ENCODE measurements at regions of chr3 and their contacts with region 1.

Region 1: GRCh38 chr3:125055913-125056745 is at the start of gene HEG1:
- DNase-seq: peak; percentile 74 to 85
- ATAC-seq: peak; percentile 66 to 77 (median 74)
- H3K4me3 ChIP-seq: peak within 1 kb of the TSS; percentile 61
- H3K4me3 Mint-ChIP-seq: peak within 1 kb of the TSS; percentile 97
- H3K27ac ChIP-seq: peak within 1 kb of the TSS; percentile 82
- H3K27ac Mint-ChIP-seq: peak within 1 kb of the TSS; percentile 96
- H3K4me1 ChIP-seq: peaks cover 36% of the 10 kb centered on the region
- H3K4me1 Mint-ChIP-seq: peaks cover 40 to 44% of the 10 kb centered on the region in 2 donors
- H3K27me3 ChIP-seq: no peaks in the 10 kb centered on the region
- H3K27me3 Mint-ChIP-seq: peaks cover 11 to 12% of the 10 kb centered on the region in 2 donors
- CTCF ChIP-seq: no peak
- total RNA-seq, gene HEG1: 52.1 to 83.5 (median 68.1) TPM

Region 2: GRCh38 chr3:124592621-124593441 is 463.3 kb before region 1 on chr3:
- intact Hi-C with region 1: no loop called
- DNase-seq: no peak
- ATAC-seq: no peak
- H3K4me3 ChIP-seq: no peak overlapping the region
- H3K4me3 Mint-ChIP-seq: no peak overlapping the region
- H3K27ac ChIP-seq: no peak overlapping the region
- H3K27ac Mint-ChIP-seq: no peak overlapping the region
- H3K4me1 ChIP-seq: no peaks in the 10 kb centered on the region
- H3K4me1 Mint-ChIP-seq: no peaks in the 10 kb centered on the region
- H3K27me3 ChIP-seq: no peaks in the 10 kb centered on the region
- H3K27me3 Mint-ChIP-seq: peaks cover 0 to 11% of the 10 kb centered on the region in 2 donors
- CTCF ChIP-seq: no peak

Region 3: GRCh38 chr3:124995460-124995994 is 60.6 kb before region 1 on chr3:
- intact Hi-C with region 1: loop called (anchors 2 kb)
- DNase-seq: peak; percentile 51 to 81
- ATAC-seq: peak; percentile 90 to 98 (median 97)
- H3K4me3 ChIP-seq: no peak overlapping the region
- H3K4me3 Mint-ChIP-seq: no peak overlapping the region
- H3K27ac ChIP-seq: peak overlapping the region; percentile 42
- H3K27ac Mint-ChIP-seq: peak overlapping the region; percentile 69 to 83
- H3K4me1 ChIP-seq: peaks cover 12% of the 10 kb centered on the region
- H3K4me1 Mint-ChIP-seq: peaks cover 11 to 17% of the 10 kb centered on the region in 2 donors
- H3K27me3 ChIP-seq: no peaks in the 10 kb centered on the region
- H3K27me3 Mint-ChIP-seq: no peaks in the 10 kb centered on the region
- CTCF ChIP-seq: peak; percentile 75

Region 4: GRCh38 chr3:125011941-125012340 is 44.2 kb before region 1 on chr3:
- intact Hi-C with region 1: loop called (anchors 2 kb)
- DNase-seq: no peak
- ATAC-seq: no peak
- H3K4me3 ChIP-seq: no peak overlapping the region
- H3K4me3 Mint-ChIP-seq: no peak overlapping the region
- H3K27ac ChIP-seq: no peak overlapping the region
- H3K27ac Mint-ChIP-seq: peak overlapping the region; percentile 3 to 48
- H3K4me1 ChIP-seq: peaks cover 25% of the 10 kb centered on the region
- H3K4me1 Mint-ChIP-seq: peaks cover 57 to 65% of the 10 kb centered on the region in 2 donors
- H3K27me3 ChIP-seq: no peaks in the 10 kb centered on the region
- H3K27me3 Mint-ChIP-seq: no peaks in the 10 kb centered on the region
- CTCF ChIP-seq: no peak

Region 5: DNA sequence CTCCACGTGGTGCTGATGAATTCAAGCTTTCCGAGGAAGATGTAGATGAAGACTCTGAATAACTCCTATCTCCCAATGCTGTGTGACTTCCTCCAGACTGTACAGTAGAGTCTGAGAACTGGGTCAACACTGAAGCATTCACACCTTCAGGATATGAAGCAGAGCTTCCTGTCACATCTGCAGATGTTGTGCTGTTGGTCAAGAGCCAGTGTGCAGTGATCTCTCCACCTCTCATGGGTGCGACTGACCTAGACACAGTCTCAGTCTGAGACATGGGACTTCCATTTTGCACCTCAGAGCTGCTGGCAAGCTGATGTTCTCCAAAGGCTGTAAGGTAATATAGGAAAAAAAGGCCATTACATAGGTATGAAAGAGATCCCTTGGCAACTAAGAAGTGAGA is 36.9 kb before region 1 on chr3:
- intact Hi-C with region 1: loop called (anchors 1 kb)
- DNase-seq: peak; percentile 26 to 45
- ATAC-seq: peak; percentile 86 to 92 (median 91)
- H3K4me3 ChIP-seq: no peak overlapping the region
- H3K4me3 Mint-ChIP-seq: peak overlapping the region; percentile 88
- H3K27ac ChIP-seq: peak overlapping the region; percentile 64
- H3K27ac Mint-ChIP-seq: peak overlapping the region; percentile 96
- H3K4me1 ChIP-seq: peaks cover 40% of the 10 kb centered on the region
- H3K4me1 Mint-ChIP-seq: peaks cover 75 to 82% of the 10 kb centered on the region in 2 donors
- H3K27me3 ChIP-seq: no peaks in the 10 kb centered on the region
- H3K27me3 Mint-ChIP-seq: no peaks in the 10 kb centered on the region
- CTCF ChIP-seq: no peak

Region 6: GRCh38 chr3:125037498-125038150 is 18.5 kb before region 1 on chr3:
- intact Hi-C with region 1: loop called (anchors 2 kb)
- DNase-seq: no peak
- ATAC-seq: peak; percentile 56 to 78 (median 68)
- H3K4me3 ChIP-seq: no peak overlapping the region
- H3K4me3 Mint-ChIP-seq: peak overlapping the region; percentile 47
- H3K27ac ChIP-seq: no peak overlapping the region
- H3K27ac Mint-ChIP-seq: peak overlapping the region; percentile 82 to 84
- H3K4me1 ChIP-seq: peaks cover 30% of the 10 kb centered on the region
- H3K4me1 Mint-ChIP-seq: peaks cover 66 to 72% of the 10 kb centered on the region in 2 donors
- H3K27me3 ChIP-seq: no peaks in the 10 kb centered on the region
- H3K27me3 Mint-ChIP-seq: no peaks in the 10 kb centered on the region
- CTCF ChIP-seq: no peak

Region 7: DNA sequence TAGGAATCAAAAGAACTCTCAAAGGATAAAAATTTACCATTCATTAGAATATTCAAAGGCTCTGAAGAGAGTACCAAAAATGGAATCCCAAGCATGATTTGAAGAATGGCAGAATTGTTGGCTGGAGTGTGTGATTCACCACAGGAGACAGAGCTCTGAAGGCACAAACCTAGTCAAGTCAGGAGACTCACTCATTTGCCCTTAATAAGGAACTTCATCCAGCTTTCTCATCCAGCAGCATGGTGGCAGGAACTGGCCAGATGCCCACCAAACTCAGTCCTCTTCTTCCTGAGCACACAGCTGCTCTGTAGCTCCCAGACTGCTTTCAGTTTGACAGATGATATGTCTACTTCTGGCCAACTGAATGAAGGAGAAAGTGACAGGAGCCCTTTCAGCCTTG is 16.2 kb after region 1 on chr3:
- intact Hi-C with region 1: no loop called
- DNase-seq: no peak
- ATAC-seq: no peak
- H3K4me3 ChIP-seq: no peak overlapping the region
- H3K4me3 Mint-ChIP-seq: no peak overlapping the region
- H3K27ac ChIP-seq: no peak overlapping the region
- H3K27ac Mint-ChIP-seq: no peak overlapping the region
- H3K4me1 ChIP-seq: peaks cover 29% of the 10 kb centered on the region
- H3K4me1 Mint-ChIP-seq: peaks cover 31 to 32% of the 10 kb centered on the region in 2 donors
- H3K27me3 ChIP-seq: no peaks in the 10 kb centered on the region
- H3K27me3 Mint-ChIP-seq: no peaks in the 10 kb centered on the region
- CTCF ChIP-seq: no peak

Region 8: DNA sequence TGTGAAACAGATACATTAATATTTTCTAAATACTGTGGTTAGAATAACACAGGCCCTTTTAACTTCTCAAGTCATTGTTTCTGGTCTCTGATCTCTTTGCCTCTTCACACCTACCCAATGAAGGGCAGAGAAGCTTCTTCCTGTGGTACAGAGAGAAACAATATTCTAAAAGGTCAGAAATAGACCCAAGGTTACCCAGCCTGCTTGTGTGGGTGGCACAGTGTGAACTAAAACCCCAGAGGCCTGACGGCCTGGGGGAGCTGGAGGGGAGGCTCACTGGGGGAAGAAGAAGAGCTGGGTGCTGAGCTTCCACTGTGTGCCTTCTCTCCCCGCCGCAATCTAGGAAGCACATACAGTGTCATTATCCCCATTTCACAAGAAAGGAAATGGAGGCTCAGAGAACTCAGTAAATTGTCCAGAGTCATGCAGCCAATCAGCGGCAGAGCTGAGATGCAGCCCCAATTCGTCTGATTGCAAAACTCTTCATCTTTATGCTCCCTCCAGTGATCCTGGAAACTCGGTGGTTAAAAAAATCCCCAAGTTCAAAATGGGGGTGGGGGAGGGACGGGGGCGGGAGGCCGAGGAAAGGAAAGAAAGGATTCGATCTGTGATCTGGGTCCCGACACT is 63.7 kb after region 1 on chr3:
- intact Hi-C with region 1: loop called (anchors 1 kb)
- DNase-seq: peak; percentile 41 to 50
- ATAC-seq: peak; percentile 76 to 92 (median 78)
- H3K4me3 ChIP-seq: no peak overlapping the region
- H3K4me3 Mint-ChIP-seq: peak overlapping the region; percentile 81
- H3K27ac ChIP-seq: peak overlapping the region; percentile 79
- H3K27ac Mint-ChIP-seq: peak overlapping the region; percentile 92 to 98
- H3K4me1 ChIP-seq: peaks cover 70% of the 10 kb centered on the region
- H3K4me1 Mint-ChIP-seq: peaks cover 67 to 70% of the 10 kb centered on the region in 2 donors
- H3K27me3 ChIP-seq: no peaks in the 10 kb centered on the region
- H3K27me3 Mint-ChIP-seq: no peaks in the 10 kb centered on the region
- CTCF ChIP-seq: no peak

Region 9: GRCh38 chr3:125141596-125142419 is 85.7 kb after region 1 on chr3:
- intact Hi-C with region 1: loop called (anchors 1 kb)
- DNase-seq: peak; percentile 61 to 86
- ATAC-seq: peak; percentile 87 to 91 (median 91)
- H3K4me3 ChIP-seq: peak overlapping the region; percentile 29
- H3K4me3 Mint-ChIP-seq: peak overlapping the region; percentile 86
- H3K27ac ChIP-seq: peak overlapping the region; percentile 59
- H3K27ac Mint-ChIP-seq: peak overlapping the region; percentile 84 to 95
- H3K4me1 ChIP-seq: peaks cover 57% of the 10 kb centered on the region
- H3K4me1 Mint-ChIP-seq: peaks cover 46 to 66% of the 10 kb centered on the region in 2 donors
- H3K27me3 ChIP-seq: no peaks in the 10 kb centered on the region
- H3K27me3 Mint-ChIP-seq: no peaks in the 10 kb centered on the region
- CTCF ChIP-seq: peak; percentile 6